Panc1 (cell line): ENCODE measurements at regions of chr5 and their contacts with region 1.

Region 1: GRCh38 chr5:180126726-180127681 is 55.4 kb upstream of the RNF130 start:
- DNase-seq: no peak
- ATAC-seq: peak; percentile 77
- H3K4me3 ChIP-seq: peak overlapping the region; percentile 2 to 25; a peak in 3 of 4 replicates
- H3K27ac ChIP-seq: no peak overlapping the region
- H3K4me1 ChIP-seq: peaks cover 7% of the 10 kb centered on the region
- H3K27me3 ChIP-seq: peaks cover 9% of the 10 kb centered on the region
- CTCF ChIP-seq: peak; percentile 98

Region 2: GRCh38 chr5:180178531-180179441 is 51.8 kb after region 1 on chr5:
- CTCF ChIA-PET with region 1: interaction called, 10 read pairs
- POLR2A ChIA-PET with region 1: no interaction called
- in situ Hi-C with region 1: no loop called
- intact Hi-C with region 1: no loop called
- DNase-seq: no peak
- ATAC-seq: no peak
- H3K4me3 ChIP-seq: no peak overlapping the region
- H3K27ac ChIP-seq: no peak overlapping the region
- H3K4me1 ChIP-seq: peaks cover 13% of the 10 kb centered on the region
- H3K27me3 ChIP-seq: no peaks in the 10 kb centered on the region
- CTCF ChIP-seq: no peak

Region 3: GRCh38 chr5:180209137-180209581 is 82.2 kb after region 1 on chr5 and contains the start of gene RASGEF1C:
- CTCF ChIA-PET with region 1: interaction called, 7 read pairs
- POLR2A ChIA-PET with region 1: no interaction called
- in situ Hi-C with region 1: no loop called
- intact Hi-C with region 1: loop called (anchors 5 kb)
- DNase-seq: no peak
- ATAC-seq: peak; percentile 96
- H3K4me3 ChIP-seq: peak within 1 kb of the TSS; percentile 43 to 46; a peak in 3 of 4 replicates
- H3K27ac ChIP-seq: no peak within 1 kb of the TSS
- H3K4me1 ChIP-seq: peaks cover 6% of the 10 kb centered on the region; the same call in 1 of the 2 replicates
- H3K27me3 ChIP-seq: no peaks in the 10 kb centered on the region
- CTCF ChIP-seq: peak; percentile 91
- total RNA-seq, gene RASGEF1C: 0.49 TPM

Region 4: GRCh38 chr5:180315762-180316212 is 188.8 kb after region 1 on chr5:
- CTCF ChIA-PET with region 1: no interaction called
- POLR2A ChIA-PET with region 1: no interaction called
- in situ Hi-C with region 1: no loop called
- intact Hi-C with region 1: loop called (anchors 10 kb)
- DNase-seq: no peak
- ATAC-seq: peak; percentile 86
- H3K4me3 ChIP-seq: no peak overlapping the region
- H3K27ac ChIP-seq: no peak overlapping the region
- H3K4me1 ChIP-seq: no peaks in the 10 kb centered on the region
- H3K27me3 ChIP-seq: no peaks in the 10 kb centered on the region
- CTCF ChIP-seq: peak; percentile 98

Region 5: DNA sequence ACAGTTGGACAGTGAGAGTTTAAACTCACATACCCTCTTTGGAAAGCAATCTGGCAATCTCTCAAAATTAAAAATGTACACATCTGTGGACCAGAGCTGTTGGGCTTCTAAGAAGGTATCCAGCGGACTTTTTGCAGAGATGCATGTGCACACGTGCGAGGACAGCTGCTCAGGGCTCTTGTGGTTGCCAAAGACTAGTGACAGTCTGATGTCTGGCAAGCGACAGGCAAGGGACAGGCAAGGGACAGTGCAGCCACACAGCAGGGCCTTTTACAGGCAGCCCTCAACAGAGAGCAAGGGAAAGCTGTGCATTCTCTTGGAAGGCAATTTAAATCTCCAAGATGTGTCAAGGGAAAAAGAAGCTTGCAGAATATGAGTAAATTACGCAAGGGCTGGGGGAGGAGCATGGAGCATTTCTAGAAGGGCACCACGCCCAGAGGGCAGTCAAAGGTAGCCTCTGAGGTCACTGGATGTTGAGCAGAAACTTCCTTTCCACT is 216.9 kb after region 1 on chr5:
- CTCF ChIA-PET with region 1: no interaction called
- POLR2A ChIA-PET with region 1: no interaction called
- in situ Hi-C with region 1: no loop called
- intact Hi-C with region 1: no loop called
- DNase-seq: no peak
- ATAC-seq: no peak
- H3K4me3 ChIP-seq: no peak overlapping the region
- H3K27ac ChIP-seq: no peak overlapping the region
- H3K4me1 ChIP-seq: no peaks in the 10 kb centered on the region
- H3K27me3 ChIP-seq: no peaks in the 10 kb centered on the region
- CTCF ChIP-seq: no peak